ENCODE measurements at regions of chr7 and their contacts with region 1.

Region 1: DNA sequence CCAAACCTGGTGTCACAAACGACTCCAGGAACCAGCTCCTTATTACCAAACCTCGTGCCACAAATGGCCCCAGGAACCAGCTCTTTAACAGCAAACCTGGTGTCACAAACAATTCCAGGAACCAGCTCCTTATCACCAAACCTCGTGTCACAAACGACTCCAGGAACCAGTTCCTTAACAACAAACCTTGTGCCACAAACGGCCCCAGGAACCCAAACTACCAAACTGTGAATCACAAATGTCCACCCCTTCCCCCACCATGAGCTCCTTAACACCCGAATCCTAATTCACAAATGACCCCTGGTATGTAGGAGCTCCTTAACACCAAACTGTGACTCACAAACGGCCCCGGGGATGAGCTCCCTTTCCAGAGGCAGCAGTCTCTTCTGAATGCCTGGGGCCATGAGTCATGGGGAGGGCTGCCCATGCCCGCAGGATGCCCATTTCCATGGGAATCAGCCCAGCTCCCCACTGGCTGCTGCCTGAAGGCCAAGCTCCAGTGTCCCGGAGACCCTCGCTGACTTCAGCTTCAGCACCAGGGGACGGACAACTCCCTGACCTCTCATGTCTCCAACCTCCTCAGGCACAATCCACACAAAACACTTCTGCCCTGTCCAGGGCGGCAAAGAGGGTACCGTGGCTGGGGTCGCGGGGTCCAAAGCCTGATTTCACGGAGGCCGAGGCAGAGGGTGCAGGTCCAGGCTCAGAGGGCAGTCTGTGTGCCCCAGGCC is 213.1 kb downstream of the ELFN1 start:
- DNase-seq: no peak
- ATAC-seq: peak; percentile 21; the same call in 1 of the 2 replicates
- H3K4me3 Mint-ChIP-seq: no peak overlapping the region
- H3K27ac Mint-ChIP-seq: peak overlapping the region; percentile 65; the same call in 1 of the 2 replicates
- H3K4me1 Mint-ChIP-seq: no peaks in the 10 kb centered on the region
- H3K27me3 Mint-ChIP-seq: no peaks in the 10 kb centered on the region
- CTCF ChIP-seq: no peak

Region 2: DNA sequence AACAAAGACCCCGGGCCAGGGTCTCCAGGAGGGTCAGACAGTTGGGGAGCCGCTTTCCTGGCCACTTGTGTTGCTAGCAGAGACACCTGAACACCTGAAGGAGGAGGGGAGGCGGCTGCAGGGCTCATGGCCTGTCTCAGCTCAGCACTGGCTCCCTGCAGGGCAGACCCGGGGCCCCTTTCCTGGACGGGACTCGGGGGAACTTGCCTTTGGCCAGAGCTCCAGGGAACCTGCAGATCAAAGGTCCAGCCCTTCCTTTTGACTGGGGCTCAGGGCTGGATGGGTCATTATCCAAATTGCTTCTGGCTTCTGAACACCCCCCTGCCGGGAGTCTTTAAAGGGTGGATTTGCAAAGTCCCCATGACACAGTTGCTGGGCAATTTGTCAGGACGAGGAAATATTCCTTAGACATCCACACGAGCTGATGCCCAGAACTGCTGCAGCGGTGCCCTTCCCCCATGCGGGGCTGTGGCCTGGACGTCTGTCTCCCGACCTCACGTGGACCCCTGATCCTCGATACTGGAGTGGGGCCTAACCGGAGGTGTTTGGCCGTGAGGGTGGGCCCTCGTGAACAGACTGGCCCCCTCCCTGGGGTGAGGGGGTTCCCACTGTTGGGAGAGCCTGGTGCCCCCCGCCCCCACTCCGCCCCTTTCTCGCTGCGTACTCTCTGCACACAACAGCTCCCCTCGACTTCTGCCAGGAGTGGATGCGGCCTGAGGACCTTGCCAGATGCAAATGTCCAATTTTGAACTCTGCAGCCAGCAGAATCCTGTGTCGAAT is 18.8 kb before region 1 on chr7:
- CTCF ChIA-PET with region 1: interaction called, 20 read pairs
- POLR2A ChIA-PET with region 1: no interaction called
- DNase-seq: peak; percentile 39
- ATAC-seq: peak; percentile 50
- H3K4me3 Mint-ChIP-seq: no peak overlapping the region
- H3K27ac Mint-ChIP-seq: no peak overlapping the region; the same call in 1 of the 2 replicates
- H3K4me1 Mint-ChIP-seq: peaks cover 12% of the 10 kb centered on the region
- H3K27me3 Mint-ChIP-seq: no peaks in the 10 kb centered on the region
- CTCF ChIP-seq: no peak

Region 3: DNA sequence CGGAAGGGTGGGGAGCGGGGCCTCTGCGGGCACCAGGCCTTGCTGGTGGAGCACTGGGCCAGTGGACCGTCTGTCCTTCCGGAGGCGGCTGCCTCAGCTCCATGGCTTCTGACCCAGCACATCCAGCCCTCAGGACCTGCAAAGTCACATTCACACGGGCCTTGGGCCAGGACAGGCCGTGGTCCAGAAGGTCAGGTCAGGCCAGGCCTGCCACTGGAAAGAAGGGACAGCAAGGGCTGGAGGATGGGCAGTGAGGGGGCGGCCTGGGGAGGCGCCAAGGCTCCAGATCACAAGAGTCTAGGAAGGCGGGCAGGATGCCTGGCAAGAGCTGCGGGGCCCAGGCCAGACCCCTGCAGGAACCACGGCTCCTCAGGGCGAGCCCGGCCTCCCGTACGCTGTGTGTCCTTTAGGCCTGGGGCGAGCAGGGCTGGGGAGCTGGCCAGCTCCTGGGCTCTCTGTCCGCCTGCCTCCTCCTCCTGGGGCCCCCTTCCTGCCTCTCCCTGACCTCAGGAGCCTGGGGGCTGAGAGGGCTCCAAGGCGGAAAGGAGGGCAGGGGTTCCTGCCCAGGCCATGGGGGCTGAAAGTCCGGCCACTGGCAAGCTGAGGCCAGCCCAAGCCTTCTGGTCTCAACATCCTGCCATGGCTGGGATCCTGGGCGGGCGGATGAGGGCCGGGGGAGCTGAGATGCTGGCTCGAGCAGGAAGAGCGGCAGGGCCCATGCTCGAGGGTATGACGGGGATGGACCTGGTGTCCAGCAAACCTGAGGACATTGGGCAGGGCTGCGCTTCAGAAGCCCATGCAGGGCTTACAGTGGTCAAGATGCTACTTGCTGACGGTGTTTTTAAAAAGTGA is 12.7 kb after region 1 on chr7:
- CTCF ChIA-PET with region 1: interaction called, 21 read pairs
- POLR2A ChIA-PET with region 1: no interaction called
- DNase-seq: no peak
- ATAC-seq: no peak
- H3K4me3 Mint-ChIP-seq: no peak overlapping the region
- H3K27ac Mint-ChIP-seq: peak overlapping the region; percentile 56
- H3K4me1 Mint-ChIP-seq: no peaks in the 10 kb centered on the region
- H3K27me3 Mint-ChIP-seq: no peaks in the 10 kb centered on the region
- CTCF ChIP-seq: no peak

Region 4: DNA sequence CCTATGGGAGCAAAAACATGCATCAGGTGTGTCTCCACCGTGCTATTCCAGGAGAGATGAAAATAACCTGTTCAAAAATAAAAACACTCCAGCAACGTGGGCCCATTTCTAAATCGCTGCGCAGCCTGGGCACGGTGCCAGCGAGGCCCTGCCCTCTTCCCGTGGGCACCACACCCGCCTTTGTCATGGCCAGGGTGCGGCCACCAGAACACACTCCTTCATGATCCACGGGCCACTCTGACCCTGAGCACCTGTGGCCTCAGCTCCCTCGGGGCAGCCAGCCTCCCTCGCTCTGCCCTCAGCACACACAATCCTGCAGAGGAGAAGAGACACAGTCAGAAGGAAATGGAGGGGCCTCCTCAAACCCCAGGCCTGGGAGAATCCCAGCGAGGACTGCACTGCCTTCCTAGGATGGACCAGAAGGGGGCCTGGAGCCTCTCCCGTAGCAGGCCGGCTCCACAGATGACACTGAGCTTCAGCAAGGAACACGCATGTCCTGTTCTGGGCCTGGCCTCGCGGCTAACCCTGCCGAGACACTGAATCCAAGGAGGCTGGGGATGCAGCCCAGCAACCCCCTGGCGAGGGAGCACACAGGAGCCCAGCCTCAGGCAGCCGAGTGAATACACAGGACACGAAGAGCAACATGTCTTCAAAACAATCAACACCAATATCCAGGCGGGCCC is 180.5 kb after region 1 on chr7:
- CTCF ChIA-PET with region 1: no interaction called
- POLR2A ChIA-PET with region 1: no interaction called
- DNase-seq: no peak
- ATAC-seq: peak; percentile 52
- H3K4me3 Mint-ChIP-seq: no peak overlapping the region
- H3K27ac Mint-ChIP-seq: no peak overlapping the region; the same call in 1 of the 2 replicates
- H3K4me1 Mint-ChIP-seq: no peaks in the 10 kb centered on the region
- H3K27me3 Mint-ChIP-seq: peaks cover 2% of the 10 kb centered on the region; the same call in 1 of the 2 replicates
- CTCF ChIP-seq: no peak